Motor neuron (in vitro differentiated cells): ENCODE measurements at regions of chr3 and their contacts with region 1.

Region 1: DNA sequence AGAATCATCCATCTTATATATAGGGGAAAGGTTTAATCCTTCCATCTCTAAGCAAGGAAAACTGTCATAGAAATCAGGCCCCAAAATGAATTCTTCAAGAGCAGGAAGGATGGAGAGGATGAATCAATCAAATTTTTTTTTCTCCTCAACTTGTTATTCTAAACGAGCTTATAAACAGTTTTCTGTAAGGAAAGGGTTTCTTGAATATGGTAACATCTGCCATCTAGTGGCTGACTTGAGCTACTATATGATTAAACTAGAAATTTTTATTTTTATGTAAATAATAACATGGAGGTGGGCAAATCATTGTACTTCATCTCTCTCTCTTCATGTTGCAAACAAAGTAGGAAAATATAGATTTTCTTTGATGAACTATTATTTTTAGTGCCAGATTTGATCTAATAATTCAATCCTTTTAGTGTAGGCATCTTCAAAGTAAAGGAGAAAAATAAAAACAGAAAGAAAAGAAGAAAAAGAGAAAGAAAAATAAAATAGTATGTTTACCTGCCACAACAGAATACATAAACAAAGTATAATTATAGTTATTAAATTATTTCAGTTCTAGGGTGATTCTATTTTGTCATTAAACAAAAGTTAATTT is 146.6 kb downstream of the SERPINI1 start:
- ATAC-seq: peak in 4 of 8 experiments; percentile 37 to 63 (median 56)
- H3K4me3 ChIP-seq: no peak overlapping the region
- H3K27ac ChIP-seq: no peak overlapping the region
- H3K4me1 ChIP-seq: peaks cover 0 to 6% of the 10 kb centered on the region in 2 donors

Region 2: GRCh38 chr3:167380004-167380689 is 502.0 kb before region 1 on chr3 and contains the start of gene ZBBX:
- in situ Hi-C with region 1: loop called in 2 of 9 experiments (anchors 25 kb)
- ATAC-seq: peak; percentile 97 to 100 (median 98)
- H3K4me3 ChIP-seq: peak within 1 kb of the TSS; percentile 35 to 55 (median 38)
- H3K27ac ChIP-seq: no peak within 1 kb of the TSS
- H3K4me1 ChIP-seq: no peaks in the 10 kb centered on the region
- total RNA-seq, gene ZBBX: 0.10 to 32.7 (median 3.5) TPM

Region 3: GRCh38 chr3:167406875-167407492 is 475.2 kb before region 1 on chr3:
- in situ Hi-C with region 1: loop called in 2 of 9 experiments (anchors 25 kb)
- ATAC-seq: peak; percentile 73 to 100 (median 94)
- H3K4me3 ChIP-seq: no peak overlapping the region
- H3K27ac ChIP-seq: no peak overlapping the region
- H3K4me1 ChIP-seq: no peaks in the 10 kb centered on the region